Activated B cell treated with CpG ODN at 0.5 μM for 24 hours (primary cell): ENCODE measurements at regions of chr14 and their contacts with region 1.

Region 1: DNA sequence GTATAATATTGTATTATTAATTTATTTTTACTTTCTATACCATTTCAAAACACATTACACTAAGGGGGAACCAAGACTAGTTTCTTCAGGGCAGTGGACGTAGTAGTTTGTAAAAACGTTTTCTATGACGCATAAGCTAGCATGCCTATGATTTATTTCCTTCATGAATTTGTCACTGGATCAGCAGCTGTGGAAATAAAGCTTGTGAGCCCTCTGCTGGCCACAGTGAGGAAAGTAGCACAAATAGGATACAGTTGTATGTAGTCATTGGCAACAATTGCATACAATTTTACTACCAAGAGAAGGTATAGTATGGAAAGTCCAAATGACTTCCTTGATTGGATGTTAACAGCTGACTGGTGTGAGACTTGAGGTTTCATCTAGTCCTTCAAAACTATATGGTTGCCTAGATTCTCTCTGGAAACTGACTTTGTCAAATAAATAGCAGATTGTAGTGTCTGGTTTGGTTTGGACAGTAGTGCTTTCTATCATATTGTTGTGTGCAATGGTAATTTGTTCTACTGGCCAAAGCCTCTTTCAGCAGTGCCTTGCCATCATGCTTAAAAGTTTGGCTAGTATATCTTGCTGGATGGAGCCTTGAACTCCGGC is 24.3 kb upstream of the PLEKHD1 start:
- DNase-seq: peak; percentile 27
- ATAC-seq: peak; percentile 92
- H3K4me3 Mint-ChIP-seq: no peak overlapping the region
- H3K27ac Mint-ChIP-seq: no peak overlapping the region
- H3K4me1 Mint-ChIP-seq: no peaks in the 10 kb centered on the region
- H3K27me3 Mint-ChIP-seq: no peaks in the 10 kb centered on the region
- CTCF ChIP-seq: no peak

Region 2: DNA sequence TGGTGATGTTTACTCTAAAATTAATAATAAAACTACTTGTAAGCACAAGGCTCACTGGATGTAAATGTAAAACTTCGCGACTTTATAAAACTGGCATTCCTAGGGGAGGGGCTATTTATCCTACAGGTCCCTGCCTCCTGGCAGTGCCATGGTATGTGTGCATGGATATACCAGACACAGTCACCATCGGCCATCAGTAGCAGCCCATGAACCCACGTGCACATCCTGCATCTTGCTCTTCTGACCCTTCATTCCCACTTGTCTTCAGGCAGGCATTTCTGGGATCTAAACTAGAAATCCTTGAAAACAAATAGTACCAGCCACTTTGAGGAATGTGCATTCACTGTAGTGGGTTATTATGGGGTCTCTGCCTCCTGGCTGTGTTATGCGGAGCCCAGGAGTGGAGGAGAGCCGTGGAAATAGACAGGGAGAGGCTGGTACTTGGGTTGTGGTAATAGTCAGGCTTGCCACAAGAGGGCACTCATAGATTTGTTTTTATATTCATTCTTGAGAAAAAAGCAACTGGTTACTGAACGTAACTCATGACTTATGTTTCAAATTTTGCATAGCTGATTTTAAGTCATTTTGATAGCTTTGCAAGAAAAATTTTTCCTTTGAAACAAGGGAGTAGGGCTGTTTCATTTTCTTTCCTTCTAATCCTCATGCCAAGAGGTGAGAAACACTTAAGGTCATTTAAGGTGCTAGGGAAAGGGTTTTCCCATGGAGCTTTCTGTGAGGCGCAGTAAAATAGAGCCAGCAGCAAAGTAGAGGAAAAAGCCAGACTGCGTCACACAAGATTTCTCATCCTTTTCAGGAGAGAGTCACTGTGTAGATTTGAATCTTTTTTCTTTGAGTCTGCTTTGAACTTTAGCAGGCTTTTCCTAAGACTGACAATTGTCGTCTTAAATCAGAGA is 217.6 kb before region 1 on chr14:
- CTCF ChIA-PET with region 1: interaction called, 124 read pairs
- POLR2A ChIA-PET with region 1: no interaction called
- intact Hi-C with region 1: loop called (anchors 1 kb)
- DNase-seq: no peak
- ATAC-seq: peak; percentile 67
- H3K4me3 Mint-ChIP-seq: no peak overlapping the region
- H3K27ac Mint-ChIP-seq: no peak overlapping the region
- H3K4me1 Mint-ChIP-seq: no peaks in the 10 kb centered on the region
- H3K27me3 Mint-ChIP-seq: peaks cover 4% of the 10 kb centered on the region
- CTCF ChIP-seq: no peak

Region 3: GRCh38 chr14:69260861-69261564 is 199.2 kb before region 1 on chr14:
- CTCF ChIA-PET with region 1: interaction called, 36 read pairs
- POLR2A ChIA-PET with region 1: no interaction called
- intact Hi-C with region 1: loop called (anchors 1 kb)
- DNase-seq: peak; percentile 52
- ATAC-seq: peak; percentile 76
- H3K4me3 Mint-ChIP-seq: peak overlapping the region; percentile 76
- H3K27ac Mint-ChIP-seq: no peak overlapping the region
- H3K4me1 Mint-ChIP-seq: peaks cover 13% of the 10 kb centered on the region
- H3K27me3 Mint-ChIP-seq: peaks cover 68% of the 10 kb centered on the region
- CTCF ChIP-seq: no peak

Region 4: DNA sequence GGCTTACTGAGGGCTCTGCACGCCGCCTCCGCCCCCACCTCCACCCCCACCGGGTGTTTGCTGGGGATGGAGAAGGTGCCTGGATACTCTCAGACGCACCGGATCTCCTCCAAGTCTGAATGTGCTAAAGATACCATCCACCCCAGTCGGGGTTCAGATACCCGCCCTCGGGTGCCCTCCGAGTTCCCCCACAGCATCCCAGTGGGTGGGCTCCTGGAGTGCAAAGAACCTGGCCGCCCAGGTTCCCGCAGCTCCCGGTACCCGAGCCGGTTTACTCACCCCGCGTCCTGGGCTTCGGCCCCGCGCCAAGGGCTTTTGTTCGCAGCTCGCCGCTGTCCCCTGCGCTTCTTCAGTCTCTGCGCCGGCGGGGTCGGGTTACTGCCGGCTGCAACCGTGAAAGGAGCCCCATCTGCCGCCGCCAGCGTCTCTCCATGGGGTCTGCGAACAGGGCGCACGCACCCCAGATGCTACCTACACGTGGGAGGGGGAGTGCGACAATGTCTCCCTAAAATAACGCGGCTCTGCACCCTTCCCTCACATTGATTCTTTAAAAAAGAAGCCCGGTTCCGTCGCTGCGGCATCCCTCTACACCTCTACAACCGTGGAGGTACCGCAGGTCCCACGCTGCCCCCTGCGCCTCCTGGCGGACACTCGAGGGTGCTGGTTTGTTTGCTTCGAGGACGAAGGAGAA is 114.2 kb after region 1 on chr14 and contains the start of gene CCDC177:
- CTCF ChIA-PET with region 1: interaction called, 8 read pairs
- POLR2A ChIA-PET with region 1: no interaction called
- intact Hi-C with region 1: loop called (anchors 1 kb)
- DNase-seq: peak; percentile 63
- ATAC-seq: peak; percentile 85
- H3K4me3 Mint-ChIP-seq: peak within 1 kb of the TSS; percentile 85
- H3K27ac Mint-ChIP-seq: no peak within 1 kb of the TSS
- H3K4me1 Mint-ChIP-seq: peaks cover 13% of the 10 kb centered on the region
- H3K27me3 Mint-ChIP-seq: peaks cover 38% of the 10 kb centered on the region
- CTCF ChIP-seq: peak; percentile 98
- total RNA-seq, gene CCDC177: 0.05 TPM in 1 of 2 replicates, not detected in the other